GM23248 (cell line): ENCODE measurements at regions of chr5 and their contacts with region 1.

Region 1: DNA sequence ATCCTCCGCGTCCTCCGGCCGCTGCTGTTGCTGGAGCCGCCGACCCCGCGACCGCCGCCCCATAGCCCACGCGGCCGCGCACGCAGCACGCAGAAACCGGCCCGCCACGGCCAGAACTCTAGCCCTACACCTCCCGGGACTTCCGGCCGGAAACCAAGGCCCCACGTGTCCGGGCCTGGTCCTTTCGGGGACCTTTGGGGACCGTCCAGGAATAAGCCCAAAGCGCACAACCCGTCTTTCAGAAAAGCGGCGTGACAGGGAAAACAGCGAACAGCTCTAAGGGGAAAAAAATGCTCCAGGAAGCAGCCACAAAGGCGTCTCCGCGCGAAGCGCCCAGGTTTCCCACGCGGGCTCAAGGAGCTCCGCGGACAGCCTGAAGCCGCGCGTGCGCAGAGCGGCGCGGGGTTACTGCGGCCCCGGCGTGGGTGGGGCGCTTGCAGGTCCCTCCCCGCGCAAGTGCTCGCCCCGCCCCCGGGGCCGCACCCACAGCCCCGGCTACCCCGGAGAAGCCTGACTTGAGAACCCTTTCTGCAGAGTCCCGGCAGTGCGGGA is at the starts of genes NSUN2 and SRD5A1:
- DNase-seq: peak; percentile 97
- H3K4me3 ChIP-seq: peak within 1 kb of the TSS; percentile 82
- H3K27ac ChIP-seq: peak within 1 kb of the TSS; percentile 93
- H3K4me1 ChIP-seq: peaks cover 15% of the 10 kb centered on the region
- H3K27me3 ChIP-seq: no peaks in the 10 kb centered on the region
- total RNA-seq, gene NSUN2: 43.0 and 51.0 TPM in 2 replicates
- total RNA-seq, gene SRD5A1: 11.8 and 20.2 TPM in 2 replicates

Region 2: DNA sequence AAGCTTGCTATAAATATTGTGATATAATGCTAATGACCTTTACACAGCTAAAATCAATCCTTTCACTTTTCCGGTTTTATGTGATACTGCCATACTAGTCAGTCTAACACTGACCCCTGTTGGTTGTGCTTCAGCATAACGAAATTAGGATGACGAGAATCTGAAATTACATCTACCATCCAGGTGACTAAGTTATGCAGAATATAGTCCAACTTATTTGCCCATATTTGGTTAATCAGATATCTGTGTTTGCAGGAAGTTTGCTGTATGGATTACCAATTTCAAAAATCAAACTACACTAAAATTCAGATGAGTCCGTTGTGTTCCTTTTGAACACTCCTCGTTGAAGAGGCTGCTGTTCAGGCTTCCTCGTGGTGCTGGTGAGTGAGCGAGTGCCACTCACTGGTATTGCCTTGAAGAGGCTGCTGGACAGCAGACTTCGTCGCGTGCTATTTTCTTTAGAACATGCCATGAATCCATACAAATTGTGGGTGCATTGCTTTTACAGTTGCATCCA is 112.8 kb after region 1 on chr5:
- in situ Hi-C with region 1: loop called (anchors 25 kb)
- DNase-seq: peak; percentile 75
- H3K4me3 ChIP-seq: no peak overlapping the region
- H3K27ac ChIP-seq: no peak overlapping the region
- H3K4me1 ChIP-seq: no peaks in the 10 kb centered on the region
- H3K27me3 ChIP-seq: no peaks in the 10 kb centered on the region